Activated CD4-positive, alpha-beta T cell treated with anti-CD3 and anti-CD28 coated beads for 36 hours (primary cell): ENCODE measurements at regions of chr4 and their contacts with region 1.

Region 1: GRCh38 chr4:110516106-110516922 is 40.4 kb downstream of the ENPEP start:
- DNase-seq: peak; percentile 83
- ATAC-seq: peak; percentile 90
- H3K4me3 Mint-ChIP-seq: peak overlapping the region; percentile 87
- H3K27ac Mint-ChIP-seq: peak overlapping the region; percentile 48
- H3K4me1 Mint-ChIP-seq: peaks cover 15% of the 10 kb centered on the region
- H3K27me3 Mint-ChIP-seq: peaks cover 10% of the 10 kb centered on the region

Region 2: GRCh38 chr4:109424093-109424841 is 1092.0 kb before region 1 on chr4:
- CTCF ChIA-PET with region 1: no interaction called
- POLR2A ChIA-PET with region 1: no interaction called
- intact Hi-C with region 1: loop called (anchors 2 to 5 kb)
- DNase-seq: no peak
- ATAC-seq: no peak
- H3K4me3 Mint-ChIP-seq: no peak overlapping the region
- H3K27ac Mint-ChIP-seq: no peak overlapping the region
- H3K4me1 Mint-ChIP-seq: peaks cover 13% of the 10 kb centered on the region
- H3K27me3 Mint-ChIP-seq: no peaks in the 10 kb centered on the region

Region 3: DNA sequence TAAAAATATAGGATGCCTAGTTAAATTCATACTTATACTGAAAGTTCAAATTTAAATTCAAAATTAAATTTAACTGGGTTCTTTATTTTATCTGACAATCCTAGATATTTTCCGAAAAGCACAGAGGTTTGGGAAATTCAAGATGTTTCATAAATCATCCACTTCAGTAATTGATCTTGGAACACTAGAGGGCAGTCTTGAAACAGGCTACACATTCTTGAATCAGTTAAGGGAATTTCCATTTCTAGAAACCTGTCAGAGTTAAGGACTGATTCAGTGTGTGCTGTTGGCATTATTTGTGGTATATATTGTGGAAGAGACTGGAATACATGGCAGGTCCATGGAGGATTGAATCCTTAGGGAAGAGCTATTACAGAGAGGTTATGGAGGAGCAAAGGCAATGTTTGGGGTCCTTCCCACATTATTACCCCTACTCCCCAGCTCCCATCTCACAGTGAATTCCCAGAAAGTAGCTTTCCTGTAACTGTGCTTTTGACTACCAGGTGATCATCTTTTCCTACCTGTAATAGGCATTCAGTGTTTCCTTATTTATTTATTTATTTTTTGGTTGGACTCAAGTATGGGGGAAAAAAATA is 510.8 kb before region 1 on chr4:
- CTCF ChIA-PET with region 1: interaction called, 398 read pairs
- POLR2A ChIA-PET with region 1: no interaction called
- intact Hi-C with region 1: loop called (anchors 1 kb)
- DNase-seq: no peak
- ATAC-seq: peak; percentile 60
- H3K4me3 Mint-ChIP-seq: no peak overlapping the region
- H3K27ac Mint-ChIP-seq: no peak overlapping the region
- H3K4me1 Mint-ChIP-seq: no peaks in the 10 kb centered on the region
- H3K27me3 Mint-ChIP-seq: no peaks in the 10 kb centered on the region

Region 4: GRCh38 chr4:110049951-110050925 is 466.1 kb before region 1 on chr4:
- CTCF ChIA-PET with region 1: interaction called, 13 read pairs
- POLR2A ChIA-PET with region 1: no interaction called
- intact Hi-C with region 1: loop called (anchors 1 to 2 kb)
- DNase-seq: peak; percentile 66
- ATAC-seq: peak; percentile 50
- H3K4me3 Mint-ChIP-seq: no peak overlapping the region
- H3K27ac Mint-ChIP-seq: no peak overlapping the region
- H3K4me1 Mint-ChIP-seq: peaks cover 5% of the 10 kb centered on the region
- H3K27me3 Mint-ChIP-seq: peaks cover 2% of the 10 kb centered on the region

Region 5: DNA sequence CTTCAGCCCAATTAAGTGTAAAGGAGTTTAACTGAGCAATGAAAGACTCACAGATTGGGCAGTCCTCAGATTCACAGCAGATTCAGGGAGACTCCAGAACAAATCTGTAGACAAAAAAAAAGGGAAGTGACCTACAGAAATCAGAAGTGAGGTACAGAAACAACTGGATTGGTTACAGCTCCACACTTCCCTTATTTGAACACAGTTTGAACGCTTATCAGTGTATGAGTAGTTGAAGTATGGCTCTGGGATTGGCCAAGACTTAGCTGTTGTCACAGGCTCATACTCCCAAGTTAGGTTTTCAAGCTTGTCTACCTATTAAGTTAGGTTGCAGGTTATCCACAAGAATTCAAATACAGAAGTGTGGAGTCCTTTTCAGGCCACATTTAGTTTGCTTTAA is 205.5 kb before region 1 on chr4:
- CTCF ChIA-PET with region 1: interaction called, 11 read pairs
- POLR2A ChIA-PET with region 1: no interaction called
- intact Hi-C with region 1: loop called (anchors 1 kb)
- DNase-seq: no peak
- ATAC-seq: no peak
- H3K4me3 Mint-ChIP-seq: no peak overlapping the region
- H3K27ac Mint-ChIP-seq: no peak overlapping the region
- H3K4me1 Mint-ChIP-seq: no peaks in the 10 kb centered on the region
- H3K27me3 Mint-ChIP-seq: peaks cover 16% of the 10 kb centered on the region

Region 6: DNA sequence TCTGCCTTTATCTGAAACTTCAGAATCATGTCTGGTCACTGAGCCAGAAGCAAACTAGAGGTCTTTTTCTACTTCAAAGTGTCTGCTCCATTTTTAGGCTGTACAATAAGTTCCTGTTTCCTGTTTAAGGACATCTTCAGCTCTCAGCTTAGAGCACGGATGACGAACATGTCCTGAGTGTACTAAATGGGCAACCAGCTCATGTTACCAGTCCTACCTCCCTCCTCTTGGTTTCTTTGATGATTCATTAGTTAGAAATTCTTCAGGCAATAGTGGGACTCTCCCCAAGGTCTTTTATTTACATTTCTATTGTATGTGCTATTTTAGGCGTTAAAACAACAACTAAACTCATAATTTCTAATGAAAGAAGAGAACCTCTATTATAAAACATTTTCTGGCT is 17.6 kb after region 1 on chr4:
- CTCF ChIA-PET with region 1: interaction called, 15 read pairs
- POLR2A ChIA-PET with region 1: no interaction called
- intact Hi-C with region 1: no loop called
- DNase-seq: no peak
- ATAC-seq: no peak
- H3K4me3 Mint-ChIP-seq: no peak overlapping the region
- H3K27ac Mint-ChIP-seq: no peak overlapping the region
- H3K4me1 Mint-ChIP-seq: no peaks in the 10 kb centered on the region
- H3K27me3 Mint-ChIP-seq: peaks cover 22% of the 10 kb centered on the region